Activated CD4-positive, alpha-beta memory T cell treated with anti-CD3 and anti-CD28 coated beads for 36 hours (primary cell): ENCODE measurements at regions of chr10 and their contacts with region 1.

Region 1: DNA sequence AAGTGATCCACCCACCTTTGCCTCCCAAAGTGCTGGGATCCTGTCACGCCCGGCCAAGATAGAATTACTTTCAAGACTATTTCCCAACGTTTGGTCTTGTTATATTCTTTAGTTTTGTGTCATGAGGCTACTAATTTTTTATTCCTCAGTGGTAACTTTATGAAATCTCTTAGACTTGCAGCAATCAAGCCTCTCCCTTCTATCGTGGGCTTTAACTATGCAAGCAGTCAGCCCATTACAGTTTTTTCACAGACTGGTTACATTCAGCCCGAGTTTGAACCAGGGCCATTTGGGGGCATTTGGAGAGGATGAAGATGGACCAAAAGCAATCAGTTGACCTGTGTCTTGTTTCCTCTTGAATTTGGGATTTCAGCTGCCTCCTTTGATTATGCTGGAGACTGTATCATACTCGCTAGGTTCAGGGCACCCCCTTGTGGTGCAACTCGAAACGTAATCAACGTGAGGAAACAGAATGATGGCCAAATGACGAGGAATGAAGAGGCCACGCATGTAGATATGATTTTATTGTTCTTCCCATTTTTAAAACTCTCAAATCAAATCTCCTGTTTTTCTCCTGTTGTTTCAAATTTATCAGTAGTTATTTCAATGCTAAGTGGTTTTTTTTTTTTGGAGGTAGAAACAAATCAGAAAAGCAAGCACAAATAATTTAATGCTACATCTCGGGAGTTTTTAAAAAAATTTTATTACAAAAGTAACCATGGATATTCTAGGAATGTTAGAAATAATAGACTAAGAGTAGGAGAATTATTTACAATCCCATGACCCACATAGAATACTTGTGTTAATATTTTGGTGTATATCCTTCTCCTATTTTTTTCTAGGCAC is 151.6 kb downstream of the KIAA1217 start:
- DNase-seq: peak; percentile 61
- H3K4me3 Mint-ChIP-seq: no peak overlapping the region
- H3K27ac Mint-ChIP-seq: no peak overlapping the region
- H3K4me1 Mint-ChIP-seq: no peaks in the 10 kb centered on the region
- H3K27me3 Mint-ChIP-seq: peaks cover 5% of the 10 kb centered on the region

Region 2: DNA sequence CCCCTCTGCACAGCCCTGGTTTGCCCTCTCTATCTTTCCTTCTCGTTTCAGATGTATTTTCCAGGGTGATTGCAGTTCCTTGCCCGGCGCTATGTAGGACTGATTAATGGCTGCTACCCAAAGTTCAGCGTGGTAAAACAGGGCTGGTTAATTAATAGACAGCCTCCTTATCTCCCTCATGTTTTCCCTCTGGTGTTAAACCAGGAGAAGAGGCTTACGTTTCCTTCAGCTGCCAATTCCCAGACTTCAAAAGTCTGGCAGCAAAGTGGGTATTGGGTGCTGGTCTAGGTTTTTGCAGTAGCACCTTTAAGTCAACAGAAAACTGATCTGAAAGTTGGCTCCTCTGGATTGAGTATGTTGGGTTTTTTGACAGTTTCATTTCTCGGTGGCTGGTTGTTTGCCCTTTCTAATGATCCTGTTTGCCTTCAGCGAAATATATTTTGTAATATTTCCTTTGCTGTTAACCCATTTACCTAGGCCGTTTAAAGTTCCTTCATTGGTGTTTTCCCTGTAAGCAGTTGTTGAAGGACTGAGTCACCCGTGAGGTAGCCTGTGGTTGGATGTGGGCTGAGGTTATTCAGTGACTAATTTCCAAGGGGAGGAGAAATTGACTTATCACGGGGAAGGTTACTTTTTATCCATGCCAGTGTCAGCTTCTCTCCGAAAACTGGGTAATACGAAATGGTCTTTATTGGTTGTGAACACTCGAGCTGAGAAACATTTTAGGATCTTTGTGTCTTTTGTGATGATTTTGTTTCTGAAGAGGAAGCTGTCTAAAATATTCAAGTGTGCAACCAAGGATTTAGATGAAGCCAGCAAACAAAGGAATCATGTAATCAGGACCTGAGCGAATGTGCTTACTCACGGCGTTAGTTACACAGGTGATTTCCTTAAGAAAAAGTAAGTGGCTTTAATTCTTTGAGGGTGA is 105.7 kb after region 1 on chr10:
- CTCF ChIA-PET with region 1: no interaction called
- POLR2A ChIA-PET with region 1: no interaction called
- intact Hi-C with region 1: no loop called
- DNase-seq: peak; percentile 84
- H3K4me3 Mint-ChIP-seq: peak overlapping the region; percentile 44
- H3K27ac Mint-ChIP-seq: peak overlapping the region; percentile 53
- H3K4me1 Mint-ChIP-seq: peaks cover 42% of the 10 kb centered on the region
- H3K27me3 Mint-ChIP-seq: peaks cover 21% of the 10 kb centered on the region

Region 3: GRCh38 chr10:24518981-24519597 is 158.6 kb after region 1 on chr10:
- CTCF ChIA-PET with region 1: interaction called, 3 read pairs
- POLR2A ChIA-PET with region 1: no interaction called
- intact Hi-C with region 1: loop called (anchors 5 kb)
- DNase-seq: peak; percentile 46
- H3K4me3 Mint-ChIP-seq: no peak overlapping the region
- H3K27ac Mint-ChIP-seq: no peak overlapping the region
- H3K4me1 Mint-ChIP-seq: peaks cover 11% of the 10 kb centered on the region
- H3K27me3 Mint-ChIP-seq: peaks cover 7% of the 10 kb centered on the region